WTC11 (cell line): ENCODE measurements at regions of chr2 and their contacts with region 1.

Region 1: DNA sequence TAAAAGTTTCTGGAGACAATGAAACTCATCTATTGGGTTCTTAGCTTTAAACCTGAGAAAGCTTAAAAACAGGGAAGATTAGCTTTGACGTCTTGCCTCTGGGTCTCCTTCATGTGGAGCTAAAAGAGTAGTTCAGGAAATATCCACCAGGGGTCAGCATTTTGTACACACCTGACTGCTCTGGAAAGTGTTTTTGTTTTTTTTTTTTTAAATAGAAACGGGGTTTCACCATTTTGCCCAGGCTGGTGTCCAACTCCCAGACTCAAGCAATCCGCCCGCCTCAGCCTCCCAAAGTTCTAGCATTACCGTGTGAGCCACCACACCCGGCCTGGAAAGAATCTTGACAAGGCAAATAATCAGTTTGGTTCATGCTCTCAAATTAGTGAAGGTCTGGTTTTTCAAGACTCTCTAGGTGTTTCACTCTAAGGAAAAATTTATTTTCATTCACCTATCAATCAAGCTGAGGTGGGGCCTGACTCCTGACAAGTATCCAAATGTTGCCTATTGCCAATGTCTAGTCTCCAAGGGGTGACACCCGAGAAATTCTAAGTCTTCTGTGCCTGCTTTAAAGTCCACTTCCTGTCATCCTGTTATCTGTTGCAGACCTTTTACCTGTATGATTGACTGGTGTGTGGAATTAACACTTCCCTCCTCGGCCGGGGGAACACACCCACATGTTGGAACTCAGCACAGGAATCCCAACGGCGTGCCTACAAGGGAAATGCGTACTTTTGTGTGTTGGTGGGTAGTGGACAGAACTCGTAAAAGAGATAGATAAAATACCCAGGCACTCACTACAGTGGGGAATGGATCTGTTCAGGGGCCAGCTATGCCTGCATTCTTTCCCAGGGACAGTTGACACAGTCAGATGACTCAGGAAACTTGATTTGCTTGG is 11.3 kb downstream of the IL1RN start:
- DNase-seq: no peak
- ATAC-seq: peak; percentile 65
- H3K4me3 Mint-ChIP-seq: no peak overlapping the region
- H3K27ac Mint-ChIP-seq: no peak overlapping the region
- H3K4me1 Mint-ChIP-seq: no peaks in the 10 kb centered on the region
- H3K27me3 Mint-ChIP-seq: no peaks in the 10 kb centered on the region
- CTCF ChIP-seq: peak; percentile 68

Region 2: GRCh38 chr2:113080134-113080533 is 58.5 kb before region 1 on chr2:
- CTCF ChIA-PET with region 1: interaction called, 68 read pairs
- POLR2A ChIA-PET with region 1: no interaction called
- DNase-seq: peak; percentile 75
- ATAC-seq: peak; percentile 96
- H3K4me3 Mint-ChIP-seq: no peak overlapping the region
- H3K27ac Mint-ChIP-seq: no peak overlapping the region
- H3K4me1 Mint-ChIP-seq: peaks cover 8% of the 10 kb centered on the region
- H3K27me3 Mint-ChIP-seq: peaks cover 26% of the 10 kb centered on the region
- CTCF ChIP-seq: peak; percentile 39; the same call in 1 of the 2 replicates

Region 3: GRCh38 chr2:113157118-113157896 is 18.6 kb after region 1 on chr2:
- CTCF ChIA-PET with region 1: interaction called, 58 read pairs
- POLR2A ChIA-PET with region 1: no interaction called
- DNase-seq: peak; percentile 56
- ATAC-seq: peak; percentile 82
- H3K4me3 Mint-ChIP-seq: peak overlapping the region; percentile 65
- H3K27ac Mint-ChIP-seq: no peak overlapping the region
- H3K4me1 Mint-ChIP-seq: peaks cover 12% of the 10 kb centered on the region
- H3K27me3 Mint-ChIP-seq: peaks cover 30% of the 10 kb centered on the region
- CTCF ChIP-seq: no peak

Region 4: GRCh38 chr2:113173542-113174395 is 35.1 kb after region 1 on chr2 and contains the start of gene PSD4:
- CTCF ChIA-PET with region 1: interaction called, 42 read pairs
- POLR2A ChIA-PET with region 1: no interaction called
- DNase-seq: no peak
- ATAC-seq: peak; percentile 54
- H3K4me3 Mint-ChIP-seq: no peak within 1 kb of the TSS
- H3K27ac Mint-ChIP-seq: no peak within 1 kb of the TSS
- H3K4me1 Mint-ChIP-seq: peaks cover 21% of the 10 kb centered on the region
- H3K27me3 Mint-ChIP-seq: no peaks in the 10 kb centered on the region; the same call in 1 of the 2 replicates
- CTCF ChIP-seq: no peak
- total RNA-seq, gene PSD4: 1.5 to 2.7 TPM (median 2.3 TPM) in 3 replicates

Region 5: GRCh38 chr2:113192438-113193100 is 53.9 kb after region 1 on chr2:
- CTCF ChIA-PET with region 1: interaction called, 155 read pairs
- POLR2A ChIA-PET with region 1: no interaction called
- DNase-seq: peak; percentile 44
- ATAC-seq: peak; percentile 97
- H3K4me3 Mint-ChIP-seq: no peak overlapping the region
- H3K27ac Mint-ChIP-seq: no peak overlapping the region
- H3K4me1 Mint-ChIP-seq: peaks cover 12% of the 10 kb centered on the region
- H3K27me3 Mint-ChIP-seq: peaks cover 10% of the 10 kb centered on the region
- CTCF ChIP-seq: no peak